GM10248 (cell line): ENCODE measurements at regions of chr17 and their contacts with region 1.

Region 1: GRCh38 chr17:28644985-28645939 is at the start of gene BLTP2:
- DNase-seq: peak; percentile 99
- CTCF ChIP-seq: no peak

Region 2: GRCh38 chr17:28634206-28634856 is 10.9 kb before region 1 on chr17:
- CTCF ChIA-PET with region 1: interaction called, 22 read pairs
- POLR2A ChIA-PET with region 1: no interaction called
- DNase-seq: no peak
- CTCF ChIP-seq: no peak

Region 3: DNA sequence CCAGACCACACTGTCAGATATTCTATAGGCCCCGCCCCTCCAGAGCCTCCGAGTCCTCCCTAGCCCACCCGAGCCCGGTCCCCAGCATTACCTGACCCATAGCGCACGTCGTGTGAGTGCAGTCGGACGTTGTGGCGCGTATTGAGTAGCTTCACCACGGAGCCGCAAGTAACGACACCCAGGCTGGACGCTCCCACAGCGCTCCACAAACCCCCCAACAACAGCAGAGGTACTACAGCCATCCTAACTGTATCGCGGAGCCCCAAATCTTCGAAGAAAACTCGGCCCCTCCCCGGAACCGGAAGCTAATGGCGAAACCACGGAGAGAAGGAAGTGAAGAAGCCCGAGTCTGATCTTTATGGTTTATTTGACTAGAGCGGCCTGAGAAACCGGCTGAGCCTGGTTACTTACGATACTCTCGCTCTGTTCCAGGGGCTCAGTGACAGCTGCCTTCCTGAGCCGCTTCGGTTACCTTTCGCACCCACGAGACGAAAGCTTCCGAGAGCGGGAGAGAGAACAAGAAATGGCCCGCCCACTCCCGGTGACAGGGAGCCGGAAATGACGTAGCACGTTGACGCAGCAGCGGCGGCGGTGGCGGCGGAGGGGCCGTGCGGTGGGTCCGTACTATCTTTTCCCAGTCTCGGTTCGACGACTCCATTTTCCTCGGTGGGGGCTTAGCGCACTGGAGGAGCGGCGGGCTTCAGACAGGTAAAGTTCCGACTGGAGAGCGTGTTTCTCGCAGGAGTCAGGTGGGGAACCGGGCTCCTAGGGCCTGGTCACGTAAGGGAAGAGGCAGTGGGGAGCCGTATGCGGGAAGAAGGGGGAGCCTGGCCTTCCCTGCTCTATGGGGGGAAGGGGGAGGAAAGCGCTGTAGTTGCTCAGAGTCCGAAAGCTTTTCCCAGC is 16.6 kb after region 1 on chr17 and contains the starts of genes SDF2 and SUPT6H:
- CTCF ChIA-PET with region 1: interaction called, 43 read pairs
- POLR2A ChIA-PET with region 1: interaction called, 5 read pairs
- DNase-seq: peak; percentile 94
- CTCF ChIP-seq: no peak

Region 4: DNA sequence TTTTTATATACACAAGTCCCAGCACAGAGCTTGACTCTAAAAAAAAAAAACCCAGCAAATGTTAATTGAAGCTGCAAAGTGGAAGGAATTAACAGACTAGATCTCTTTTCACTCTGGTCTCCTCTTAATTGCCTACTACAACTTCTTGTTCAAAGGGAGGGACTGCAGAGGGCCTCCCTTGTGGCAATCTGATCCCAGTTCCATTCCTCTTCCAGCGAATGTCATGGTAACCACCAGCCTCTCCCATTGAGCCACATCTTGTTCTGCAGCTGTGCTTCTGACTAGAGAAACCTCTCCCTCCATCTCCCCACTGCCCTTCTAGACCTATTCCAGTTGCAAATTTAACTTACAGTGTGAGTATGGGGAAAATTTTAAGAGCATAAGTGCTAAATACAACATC is 22.6 kb after region 1 on chr17:
- CTCF ChIA-PET with region 1: interaction called, 43 read pairs
- POLR2A ChIA-PET with region 1: interaction called, 3 read pairs
- DNase-seq: no peak
- CTCF ChIP-seq: no peak